ENCODE measurements at regions of chr19 and their contacts with region 1.

Region 1: DNA sequence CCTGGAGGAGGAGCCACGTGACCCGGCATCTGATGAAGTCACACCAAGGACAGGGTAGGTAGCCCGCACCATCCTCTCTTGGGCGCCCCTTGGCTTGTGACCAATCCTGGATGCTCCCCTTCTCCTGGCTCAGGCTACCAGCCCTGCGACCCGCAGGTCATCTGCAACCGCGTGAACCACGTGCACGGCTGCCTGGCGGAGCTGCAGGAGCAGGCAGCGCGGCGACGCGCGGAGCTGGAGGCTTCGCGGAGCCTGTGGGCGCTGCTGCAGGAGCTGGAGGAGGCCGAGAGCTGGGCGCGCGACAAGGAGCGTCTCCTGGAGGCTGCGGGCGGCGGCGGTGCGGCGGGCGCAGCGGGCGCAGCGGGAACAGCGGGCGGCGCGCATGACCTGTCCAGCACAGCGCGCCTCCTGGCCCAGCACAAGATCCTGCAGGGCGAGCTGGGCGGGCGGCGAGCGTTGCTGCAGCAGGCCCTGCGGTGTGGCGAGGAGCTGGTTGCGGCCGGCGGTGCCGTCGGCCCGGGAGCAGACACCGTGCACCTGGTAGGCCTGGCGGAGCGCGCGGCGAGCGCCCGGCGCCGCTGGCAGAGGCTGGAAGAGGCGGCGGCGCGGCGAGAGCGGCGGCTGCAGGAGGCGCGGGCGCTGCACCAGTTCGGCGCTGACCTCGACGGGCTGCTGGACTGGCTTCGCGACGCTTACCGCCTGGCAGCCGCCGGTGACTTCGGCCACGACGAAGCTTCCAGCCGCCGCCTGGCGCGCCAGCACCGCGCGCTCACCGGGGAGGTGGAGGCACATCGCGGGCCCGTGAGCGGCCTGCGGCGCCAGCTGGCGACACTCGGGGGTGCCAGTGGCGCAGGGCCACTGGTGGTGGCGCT is 45.9 kb downstream of the SPTBN4 start:
- DNase-seq: no peak
- ATAC-seq: peak in 3 of 4 donors; percentile 20 to 72 (median 59)
- H3K4me3 ChIP-seq: peak overlapping the region in 3 of 12 donors; percentile 16 to 32 (median 22)
- H3K27ac ChIP-seq: no peak overlapping the region
- H3K4me1 ChIP-seq: peaks cover 0 to 10% (median 0%) of the 10 kb centered on the region in 12 donors
- H3K27me3 ChIP-seq: peaks cover 9 to 41% (median 19%) of the 10 kb centered on the region in 9 donors
- CTCF ChIP-seq: no peak
- POLR2A ChIP-seq: no peak

Region 2: DNA sequence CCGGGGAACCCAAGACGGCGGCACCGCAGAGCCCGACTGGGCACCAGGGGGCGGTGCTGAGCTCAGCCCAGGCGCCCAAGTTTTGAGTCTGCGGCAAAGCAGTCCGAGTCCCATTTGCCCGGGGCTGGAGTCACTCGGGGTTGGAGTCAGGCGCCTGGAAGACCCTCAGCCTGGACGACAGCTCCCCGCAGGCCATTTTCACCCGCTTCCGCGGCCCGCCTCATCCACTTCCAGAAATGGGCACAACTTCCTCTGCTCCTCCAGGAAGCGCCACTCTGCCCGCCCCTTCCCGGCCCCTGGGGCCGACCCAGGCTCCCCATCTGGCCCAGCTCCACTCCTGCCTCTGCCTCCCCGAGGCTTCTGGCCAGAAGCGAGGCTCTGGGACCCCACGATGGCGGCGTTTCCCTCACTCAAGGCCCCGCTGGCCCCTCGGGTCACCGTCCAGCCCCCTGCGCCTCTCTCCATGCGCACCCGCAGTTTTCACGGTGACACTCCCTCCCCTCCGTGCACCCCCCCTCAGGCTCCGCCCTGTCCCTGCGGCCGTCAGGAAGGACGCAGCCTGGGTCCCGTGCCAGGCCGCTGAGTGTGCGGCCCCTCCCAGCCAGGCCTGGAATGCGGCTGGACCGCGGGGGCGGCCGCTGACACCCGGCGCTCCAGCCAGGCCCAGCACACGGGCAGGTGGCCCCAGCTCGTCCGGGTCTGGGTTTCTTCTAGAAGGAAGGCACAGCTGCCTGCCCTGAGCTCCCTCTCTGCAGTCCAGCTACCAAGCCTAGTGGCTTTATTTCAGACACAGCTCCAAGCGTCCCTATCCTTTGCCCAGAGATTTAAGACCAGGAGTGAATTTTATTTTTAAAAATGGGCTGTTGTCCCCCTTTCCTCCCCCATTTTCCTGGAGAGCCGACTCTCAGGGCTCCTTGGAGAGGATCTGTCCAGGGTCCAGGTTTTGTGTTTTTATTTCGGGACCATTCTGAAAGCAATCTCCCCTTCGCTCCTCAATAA is 91.6 kb before region 1 on chr19:
- intact Hi-C with region 1: no loop called
- DNase-seq: peak; percentile 95 to 97 (median 96)
- ATAC-seq: peak; percentile 82 to 88 (median 87)
- H3K4me3 ChIP-seq: peak overlapping the region; percentile 30 to 75 (median 64)
- H3K27ac ChIP-seq: peak overlapping the region; percentile 96 to 100 (median 99)
- H3K4me1 ChIP-seq: peaks cover 0 to 58% (median 43%) of the 10 kb centered on the region in 12 donors
- H3K27me3 ChIP-seq: no peaks in the 10 kb centered on the region
- CTCF ChIP-seq: peak; percentile 83 to 99 (median 94)
- POLR2A ChIP-seq: peak; percentile 57 to 86

Region 3: GRCh38 chr19:40474737-40475136 is 38.0 kb before region 1 on chr19:
- intact Hi-C with region 1: loop called in 1 of 10 experiments (anchors 5 kb)
- DNase-seq: no peak
- ATAC-seq: no peak
- H3K4me3 ChIP-seq: no peak overlapping the region
- H3K27ac ChIP-seq: no peak overlapping the region
- H3K4me1 ChIP-seq: no peaks in the 10 kb centered on the region
- H3K27me3 ChIP-seq: no peaks in the 10 kb centered on the region
- CTCF ChIP-seq: no peak
- POLR2A ChIP-seq: no peak

Region 4: DNA sequence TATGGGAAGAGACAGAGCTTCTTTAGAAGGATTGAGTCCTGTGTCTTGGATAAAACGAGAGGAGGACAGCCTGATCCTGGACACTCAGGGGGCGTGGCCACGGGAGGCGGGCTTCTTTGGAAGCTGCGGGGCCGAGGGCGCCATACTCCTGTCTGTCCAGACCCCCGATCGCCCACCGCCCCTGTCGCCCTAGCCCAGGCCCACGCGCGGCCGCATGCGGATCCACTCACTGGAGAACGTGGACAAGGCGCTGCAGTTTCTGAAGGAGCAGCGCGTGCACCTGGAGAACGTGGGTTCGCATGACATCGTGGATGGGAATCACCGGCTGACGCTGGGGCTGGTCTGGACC is 22.9 kb before region 1 on chr19:
- intact Hi-C with region 1: loop called in 1 of 10 experiments (anchors 2 kb)
- DNase-seq: no peak
- ATAC-seq: no peak
- H3K4me3 ChIP-seq: no peak overlapping the region
- H3K27ac ChIP-seq: no peak overlapping the region
- H3K4me1 ChIP-seq: no peaks in the 10 kb centered on the region
- H3K27me3 ChIP-seq: peaks cover 0 to 11% (median 0%) of the 10 kb centered on the region in 9 donors
- CTCF ChIP-seq: no peak
- POLR2A ChIP-seq: no peak

Region 5: GRCh38 chr19:40822161-40822560 is 309.5 kb after region 1 on chr19:
- intact Hi-C with region 1: no loop called
- DNase-seq: no peak
- ATAC-seq: no peak
- H3K4me3 ChIP-seq: no peak overlapping the region
- H3K27ac ChIP-seq: peak overlapping the region in 3 of 12 donors; percentile 47 to 54 (median 48)
- H3K4me1 ChIP-seq: peaks cover 0 to 42% (median 21%) of the 10 kb centered on the region in 12 donors
- H3K27me3 ChIP-seq: no peaks in the 10 kb centered on the region
- CTCF ChIP-seq: no peak
- POLR2A ChIP-seq: no peak

Measured in heart left ventricle (tissue), 16 donors.